ENCODE measurements at regions of chr1 and their contacts with region 1.

Region 1: GRCh38 chr1:37692078-37692833 is at the start of gene CDCA8:
- DNase-seq: peak; percentile 97
- ATAC-seq: peak; percentile 86
- H3K4me3 Mint-ChIP-seq: peak within 1 kb of the TSS; percentile 89
- H3K27ac Mint-ChIP-seq: peak within 1 kb of the TSS; percentile 92
- H3K4me1 Mint-ChIP-seq: peaks cover 35% of the 10 kb centered on the region
- H3K27me3 Mint-ChIP-seq: no peaks in the 10 kb centered on the region
- total RNA-seq, gene CDCA8: 64.7 to 67.0 TPM

Region 2: GRCh38 chr1:37595440-37596319 is 96.6 kb before region 1 on chr1 and contains the start of gene GNL2:
- POLR2A ChIA-PET with region 1: interaction called, 17 read pairs
- DNase-seq: peak; percentile 98
- ATAC-seq: peak; percentile 95
- H3K4me3 Mint-ChIP-seq: peak within 1 kb of the TSS; percentile 100
- H3K27ac Mint-ChIP-seq: peak within 1 kb of the TSS; percentile 98
- H3K4me1 Mint-ChIP-seq: peaks cover 24% of the 10 kb centered on the region
- H3K27me3 Mint-ChIP-seq: peaks cover 8% of the 10 kb centered on the region
- total RNA-seq, gene GNL2: 45.2 to 46.9 TPM

Region 3: DNA sequence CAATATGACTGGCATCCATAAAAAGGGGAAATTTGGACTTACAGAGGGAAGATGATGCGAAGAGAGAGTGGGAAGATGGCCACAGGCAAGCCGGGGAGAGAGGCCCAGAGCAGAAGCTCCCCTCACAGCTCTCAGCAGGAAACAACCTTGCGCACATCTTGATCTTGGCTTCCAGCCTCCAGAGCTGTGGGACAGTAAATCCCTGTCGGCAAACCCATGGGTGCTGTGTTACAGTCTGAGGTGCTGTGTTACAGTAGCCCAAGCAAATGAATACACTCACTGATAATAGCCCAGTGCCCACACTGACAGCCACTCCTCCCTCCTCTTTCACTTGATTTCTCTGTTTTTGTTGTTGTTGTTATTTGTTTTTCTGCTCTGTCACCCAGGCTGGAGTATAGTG is 22.4 kb after region 1 on chr1:
- POLR2A ChIA-PET with region 1: no interaction called
- DNase-seq: no peak
- ATAC-seq: no peak
- H3K4me3 Mint-ChIP-seq: no peak overlapping the region
- H3K27ac Mint-ChIP-seq: no peak overlapping the region
- H3K4me1 Mint-ChIP-seq: no peaks in the 10 kb centered on the region
- H3K27me3 Mint-ChIP-seq: peaks cover 5% of the 10 kb centered on the region

Measured in activated naive CD8-positive, alpha-beta T cell treated with anti-CD3 and anti-CD28 coated beads, Interleukin-2, amount 10 ng/mL, durations not matched to agents 7 days and 5 days (primary cell).